Posterior vena cava (tissue), 2 donors: ENCODE measurements at regions of chrX and their contacts with region 1.

Region 1: DNA sequence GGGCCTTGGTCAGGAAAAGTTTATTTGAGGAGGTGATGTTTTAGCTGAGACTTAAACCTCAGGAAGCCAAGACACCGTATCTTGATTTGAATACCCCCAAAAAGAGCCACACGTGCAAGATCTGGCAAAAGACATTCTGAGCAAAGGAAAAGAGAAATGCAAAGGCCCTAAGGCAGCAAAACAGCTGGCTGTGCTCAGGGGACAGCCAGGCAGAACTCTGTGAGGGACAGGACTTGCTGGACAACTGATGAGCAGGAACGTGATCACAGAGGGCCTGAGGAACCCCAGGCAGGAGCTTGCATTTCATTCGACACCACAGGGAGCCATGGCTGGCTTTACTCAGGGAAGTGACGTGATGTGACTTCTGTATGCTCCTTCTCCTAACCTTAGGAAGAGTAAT is 56.0 kb downstream of the OCRL start:
- DNase-seq: no peak

Region 2: DNA sequence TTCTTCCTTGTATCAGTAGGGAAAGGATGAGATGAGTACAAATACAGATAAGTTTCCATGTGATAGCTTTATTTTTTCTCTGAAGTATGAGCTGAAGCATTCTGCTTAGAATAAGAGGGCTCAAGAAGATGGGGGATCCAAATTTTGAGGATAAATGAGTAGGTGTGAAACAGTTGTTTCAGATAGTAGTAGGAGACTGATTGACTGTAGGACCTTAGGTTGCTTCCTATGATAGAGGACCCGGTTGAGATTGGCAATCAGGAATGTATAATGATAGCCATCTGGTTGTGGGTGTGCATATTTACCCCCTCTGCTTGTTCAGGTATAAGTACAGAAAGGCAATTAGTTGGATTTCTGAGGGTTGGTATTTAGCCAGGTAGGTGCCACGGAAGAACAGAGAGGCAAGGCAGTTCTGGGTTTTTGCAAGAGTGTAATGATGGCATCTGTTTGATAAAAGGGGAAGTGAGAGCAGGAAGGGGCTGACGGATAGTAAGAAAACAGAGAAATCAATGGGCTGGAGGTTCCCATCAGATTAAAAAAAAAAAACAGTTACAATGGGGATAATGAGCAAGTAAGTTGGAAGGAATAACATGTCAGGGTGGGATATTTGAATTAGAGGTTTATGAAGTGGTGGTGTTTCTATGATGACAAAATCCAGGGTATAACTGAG is 42.3 kb before region 1 on chrX:
- intact Hi-C with region 1: loop called in 1 of 2 experiments (anchors 1 kb)
- DNase-seq: no peak